Activated B cell treated with CpG ODN at 0.5 μM for 24 hours (primary cell): ENCODE measurements at regions of chr5 and their contacts with region 1.

Region 1: GRCh38 chr5:115544436-115545350 is at the start of gene FEM1C:
- DNase-seq: peak; percentile 94
- ATAC-seq: peak; percentile 95
- H3K4me3 Mint-ChIP-seq: peak within 1 kb of the TSS; percentile 98
- H3K27ac Mint-ChIP-seq: peak within 1 kb of the TSS; percentile 96
- H3K4me1 Mint-ChIP-seq: peaks cover 51% of the 10 kb centered on the region
- H3K27me3 Mint-ChIP-seq: no peaks in the 10 kb centered on the region
- CTCF ChIP-seq: no peak
- total RNA-seq, gene FEM1C: 19.1 and 19.8 TPM in 2 replicates

Region 2: GRCh38 chr5:115169487-115170133 is 375.1 kb before region 1 on chr5 and contains the start of gene TRIM36:
- CTCF ChIA-PET with region 1: no interaction called
- POLR2A ChIA-PET with region 1: interaction called, 3 read pairs
- intact Hi-C with region 1: loop called (anchors 2 kb)
- DNase-seq: peak; percentile 98
- ATAC-seq: peak; percentile 92
- H3K4me3 Mint-ChIP-seq: peak within 1 kb of the TSS; percentile 92
- H3K27ac Mint-ChIP-seq: peak within 1 kb of the TSS; percentile 69
- H3K4me1 Mint-ChIP-seq: peaks cover 16% of the 10 kb centered on the region
- H3K27me3 Mint-ChIP-seq: peaks cover 39% of the 10 kb centered on the region
- CTCF ChIP-seq: no peak
- total RNA-seq, gene TRIM36: 7.5 and 8.9 TPM in 2 replicates

Region 3: DNA sequence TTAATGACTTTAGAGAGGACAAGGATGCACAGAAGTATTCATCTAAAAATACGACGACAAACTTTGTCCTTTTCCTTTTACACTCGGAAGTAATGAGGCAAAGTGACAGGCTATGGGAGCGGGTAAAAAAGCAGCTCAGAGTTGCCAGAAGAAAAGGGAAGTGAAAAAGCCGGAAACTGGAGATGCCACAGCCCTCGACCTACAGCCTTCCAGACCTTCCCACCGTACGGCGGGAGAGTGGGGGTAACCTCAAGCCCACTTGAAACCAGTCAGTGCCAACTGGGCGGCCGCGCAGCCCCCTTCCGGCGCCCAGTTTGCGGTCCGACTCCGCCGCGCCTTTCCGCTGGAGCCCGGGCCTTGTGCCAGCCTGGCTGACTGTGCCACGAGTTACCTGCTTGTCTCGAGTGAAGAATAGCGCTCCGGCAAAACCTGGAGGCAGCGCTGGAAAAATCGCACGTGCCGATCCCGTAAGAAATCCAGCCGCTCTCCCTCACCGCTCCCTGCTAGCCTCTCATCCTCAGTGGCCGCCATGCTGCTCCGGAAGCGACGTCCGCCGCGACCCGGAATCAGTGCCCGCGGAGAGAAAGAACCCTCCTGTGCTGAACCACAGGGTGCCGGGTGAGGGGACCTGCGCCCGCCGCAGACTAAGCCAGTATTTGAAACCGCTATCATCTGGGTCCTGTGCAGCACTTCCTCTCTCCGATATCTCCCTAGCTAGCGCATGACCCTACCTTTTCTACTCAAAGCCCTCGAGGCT is 282.2 kb before region 1 on chr5 and contains the start of gene PGGT1B:
- CTCF ChIA-PET with region 1: no interaction called
- POLR2A ChIA-PET with region 1: interaction called, 16 read pairs
- intact Hi-C with region 1: no loop called
- DNase-seq: peak; percentile 63
- ATAC-seq: peak; percentile 91
- H3K4me3 Mint-ChIP-seq: peak within 1 kb of the TSS; percentile 99
- H3K27ac Mint-ChIP-seq: peak within 1 kb of the TSS; percentile 96
- H3K4me1 Mint-ChIP-seq: peaks cover 52% of the 10 kb centered on the region
- H3K27me3 Mint-ChIP-seq: no peaks in the 10 kb centered on the region
- CTCF ChIP-seq: no peak
- total RNA-seq, gene PGGT1B: 52.1 and 52.9 TPM in 2 replicates

Region 4: DNA sequence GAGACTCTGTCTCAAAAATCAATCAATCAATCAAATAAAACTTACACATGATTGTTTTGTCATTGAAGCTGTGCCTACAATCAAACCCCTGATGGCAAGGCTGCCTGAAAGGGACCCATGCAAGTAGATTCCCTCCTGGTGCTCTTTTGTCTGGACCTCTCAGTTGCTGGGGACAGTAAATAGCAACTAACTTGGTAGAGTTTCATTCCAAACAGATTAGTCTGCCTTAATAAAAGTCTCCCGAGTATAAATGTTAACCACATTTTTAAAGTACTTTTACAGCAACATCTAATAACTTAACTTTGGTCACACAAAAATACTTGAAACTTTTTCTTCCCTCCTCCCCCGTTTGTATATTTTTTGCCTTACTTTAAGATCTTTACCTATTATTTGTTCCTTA is 105.7 kb before region 1 on chr5:
- CTCF ChIA-PET with region 1: no interaction called
- POLR2A ChIA-PET with region 1: no interaction called
- intact Hi-C with region 1: no loop called
- DNase-seq: no peak
- ATAC-seq: no peak
- H3K4me3 Mint-ChIP-seq: no peak overlapping the region
- H3K27ac Mint-ChIP-seq: no peak overlapping the region
- H3K4me1 Mint-ChIP-seq: no peaks in the 10 kb centered on the region
- H3K27me3 Mint-ChIP-seq: peaks cover 20% of the 10 kb centered on the region
- CTCF ChIP-seq: no peak

Region 5: DNA sequence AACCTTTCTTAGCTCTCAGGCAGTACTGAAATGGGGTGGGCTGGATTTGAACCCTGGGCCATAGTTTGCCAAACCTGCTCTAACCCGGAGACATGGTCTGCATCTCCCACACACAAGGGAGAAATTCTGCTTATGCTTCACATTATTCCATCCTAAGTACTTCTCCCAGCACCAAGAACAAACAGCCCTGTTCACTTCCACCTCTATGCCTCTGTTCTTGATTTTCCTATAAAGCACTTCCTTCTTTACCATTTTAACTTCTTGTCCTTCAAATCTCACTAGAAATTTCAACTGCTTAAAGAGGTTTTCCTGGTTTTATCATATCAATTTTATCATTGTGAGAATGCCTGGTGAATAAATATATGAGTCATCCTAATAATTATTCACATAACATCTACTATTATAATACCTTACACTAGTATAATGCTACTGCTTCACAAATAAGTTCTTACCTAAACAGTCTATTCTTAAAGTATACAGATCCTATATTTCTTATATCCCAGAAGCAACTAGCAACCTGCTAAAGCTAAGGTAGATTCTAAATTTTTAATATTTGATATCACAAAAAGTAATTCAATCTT is 12.8 kb before region 1 on chr5:
- CTCF ChIA-PET with region 1: no interaction called
- POLR2A ChIA-PET with region 1: interaction called, 3 read pairs
- intact Hi-C with region 1: loop called (anchors 1 kb)
- DNase-seq: no peak
- ATAC-seq: no peak
- H3K4me3 Mint-ChIP-seq: no peak overlapping the region
- H3K27ac Mint-ChIP-seq: no peak overlapping the region
- H3K4me1 Mint-ChIP-seq: peaks cover 71% of the 10 kb centered on the region
- H3K27me3 Mint-ChIP-seq: no peaks in the 10 kb centered on the region
- CTCF ChIP-seq: no peak

Region 6: DNA sequence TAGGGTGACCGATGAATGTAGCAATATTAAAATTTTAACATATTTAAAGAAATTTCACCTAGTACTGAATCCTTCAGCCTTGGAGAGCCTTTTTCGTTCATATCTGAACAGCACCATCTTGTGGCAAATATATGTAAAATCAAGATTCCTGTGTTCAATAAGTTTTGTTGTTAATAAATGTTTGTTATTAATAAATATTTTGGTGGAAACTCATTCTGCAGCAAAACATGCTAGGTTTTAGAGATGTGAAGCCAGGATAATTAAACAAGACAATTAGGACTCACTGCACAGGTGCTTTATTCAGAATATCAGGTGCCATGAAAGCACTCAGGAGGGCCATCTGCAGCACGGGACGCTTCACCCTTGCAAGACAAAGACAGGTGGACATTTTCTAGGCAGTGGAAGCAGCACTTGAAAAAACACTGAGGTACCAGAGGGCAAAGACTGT is 41.9 kb after region 1 on chr5:
- CTCF ChIA-PET with region 1: no interaction called
- POLR2A ChIA-PET with region 1: interaction called, 4 read pairs
- intact Hi-C with region 1: loop called (anchors 1 kb)
- DNase-seq: no peak
- ATAC-seq: peak; percentile 60
- H3K4me3 Mint-ChIP-seq: no peak overlapping the region
- H3K27ac Mint-ChIP-seq: no peak overlapping the region
- H3K4me1 Mint-ChIP-seq: peaks cover 6% of the 10 kb centered on the region
- H3K27me3 Mint-ChIP-seq: no peaks in the 10 kb centered on the region
- CTCF ChIP-seq: no peak

Region 7: GRCh38 chr5:115625579-115626444 is 81.1 kb after region 1 on chr5 and contains the start of gene TMED7:
- CTCF ChIA-PET with region 1: no interaction called
- POLR2A ChIA-PET with region 1: no interaction called
- intact Hi-C with region 1: loop called (anchors 1 kb)
- DNase-seq: peak; percentile 99
- ATAC-seq: peak; percentile 92
- H3K4me3 Mint-ChIP-seq: no peak within 1 kb of the TSS
- H3K27ac Mint-ChIP-seq: peak within 1 kb of the TSS; percentile 93
- H3K4me1 Mint-ChIP-seq: peaks cover 29% of the 10 kb centered on the region
- H3K27me3 Mint-ChIP-seq: no peaks in the 10 kb centered on the region
- CTCF ChIP-seq: no peak
- total RNA-seq, gene TMED7: 34.9 and 35.0 TPM in 2 replicates

Region 8: GRCh38 chr5:115798252-115798651 is 253.6 kb after region 1 on chr5:
- CTCF ChIA-PET with region 1: no interaction called
- POLR2A ChIA-PET with region 1: no interaction called
- intact Hi-C with region 1: no loop called
- DNase-seq: no peak
- ATAC-seq: no peak
- H3K4me3 Mint-ChIP-seq: no peak overlapping the region
- H3K27ac Mint-ChIP-seq: no peak overlapping the region
- H3K4me1 Mint-ChIP-seq: no peaks in the 10 kb centered on the region
- H3K27me3 Mint-ChIP-seq: peaks cover 10% of the 10 kb centered on the region
- CTCF ChIP-seq: no peak

Region 9: DNA sequence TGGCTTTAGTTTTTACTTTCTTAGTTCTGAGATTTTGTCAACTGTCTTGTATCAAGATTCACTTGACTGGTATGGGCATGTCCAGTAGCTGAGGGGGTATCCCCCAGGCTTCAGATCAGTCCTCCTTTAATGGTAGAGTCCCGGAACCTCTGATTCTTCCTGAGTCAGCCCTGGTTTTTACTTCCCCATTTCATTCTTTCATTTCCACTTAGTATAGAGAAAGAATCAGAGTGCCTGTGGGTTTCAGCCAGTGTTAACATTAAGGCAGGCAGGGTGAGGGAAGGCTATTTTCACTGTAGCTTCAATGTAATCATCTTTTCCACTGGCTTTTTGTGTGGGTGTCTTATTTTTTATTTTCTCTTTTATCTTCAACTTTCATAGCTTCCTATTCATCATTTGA is 531.8 kb after region 1 on chr5:
- CTCF ChIA-PET with region 1: no interaction called
- POLR2A ChIA-PET with region 1: interaction called, 7 read pairs
- intact Hi-C with region 1: loop called (anchors 2 kb)
- DNase-seq: no peak
- ATAC-seq: peak; percentile 95
- H3K4me3 Mint-ChIP-seq: peak overlapping the region; percentile 76
- H3K27ac Mint-ChIP-seq: peak overlapping the region; percentile 88
- H3K4me1 Mint-ChIP-seq: peaks cover 29% of the 10 kb centered on the region
- H3K27me3 Mint-ChIP-seq: no peaks in the 10 kb centered on the region
- CTCF ChIP-seq: no peak